CD8-positive, alpha-beta memory T cell (primary cell): ENCODE measurements at regions of chr4 and their contacts with region 1.

Region 1: DNA sequence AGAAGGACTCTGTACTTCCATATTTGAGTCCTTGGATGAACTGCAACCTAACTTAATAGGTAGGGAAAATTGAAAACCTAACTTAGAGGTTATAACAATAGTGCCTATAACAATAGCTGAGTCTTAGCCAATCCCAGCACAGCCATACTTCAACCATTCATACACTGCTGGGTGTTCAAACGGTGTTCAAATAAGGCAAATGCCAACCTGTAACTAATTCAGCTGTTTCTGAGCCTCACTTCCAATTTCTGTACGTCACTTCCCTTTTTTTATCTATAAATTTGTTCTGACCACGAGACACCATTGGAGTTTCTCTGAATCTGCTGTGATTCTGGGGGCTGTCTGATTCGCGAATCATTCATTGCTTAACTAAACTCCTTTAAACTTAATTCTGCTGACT is 9.6 kb upstream of the GRSF1 start:
- DNase-seq: no peak
- H3K4me3 ChIP-seq: no peak overlapping the region
- H3K4me3 Mint-ChIP-seq: no peak overlapping the region
- H3K27ac ChIP-seq: no peak overlapping the region
- H3K27ac Mint-ChIP-seq: peak overlapping the region in 1 of 8 donors; percentile 57
- H3K4me1 ChIP-seq: no peaks in the 10 kb centered on the region
- H3K4me1 Mint-ChIP-seq: no peaks in the 10 kb centered on the region
- H3K27me3 ChIP-seq: no peaks in the 10 kb centered on the region
- H3K27me3 Mint-ChIP-seq: no peaks in the 10 kb centered on the region

Region 2: DNA sequence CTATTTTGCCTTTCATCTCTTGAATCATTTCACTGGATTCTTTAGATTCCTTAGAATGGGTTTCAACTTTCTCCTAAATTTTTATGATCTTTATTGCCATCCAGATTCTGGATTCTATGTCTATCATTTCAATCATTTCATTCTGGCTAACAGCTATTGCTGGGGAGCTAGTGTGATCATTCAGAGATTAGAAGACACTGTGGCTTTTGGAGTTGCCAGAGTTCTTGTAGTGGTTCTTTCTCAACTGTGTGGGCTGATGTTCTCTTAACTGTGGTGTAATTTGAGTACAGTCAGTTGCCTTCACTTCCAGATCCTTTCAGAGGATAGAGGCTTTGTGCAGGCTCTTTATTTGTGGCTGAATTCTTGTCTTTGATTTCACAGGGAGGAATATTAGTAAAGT is 871.7 kb before region 1 on chr4:
- CTCF ChIA-PET with region 1: no interaction called
- POLR2A ChIA-PET with region 1: no interaction called
- DNase-seq: no peak
- H3K4me3 ChIP-seq: no peak overlapping the region
- H3K4me3 Mint-ChIP-seq: no peak overlapping the region
- H3K27ac ChIP-seq: no peak overlapping the region
- H3K27ac Mint-ChIP-seq: no peak overlapping the region
- H3K4me1 ChIP-seq: no peaks in the 10 kb centered on the region
- H3K4me1 Mint-ChIP-seq: no peaks in the 10 kb centered on the region
- H3K27me3 ChIP-seq: no peaks in the 10 kb centered on the region
- H3K27me3 Mint-ChIP-seq: no peaks in the 10 kb centered on the region

Region 3: GRCh38 chr4:70637239-70637913 is 211.9 kb before region 1 on chr4:
- CTCF ChIA-PET with region 1: no interaction called
- POLR2A ChIA-PET with region 1: interaction called, 10 read pairs
- DNase-seq: no peak
- H3K4me3 ChIP-seq: no peak overlapping the region
- H3K4me3 Mint-ChIP-seq: no peak overlapping the region
- H3K27ac ChIP-seq: no peak overlapping the region
- H3K27ac Mint-ChIP-seq: no peak overlapping the region
- H3K4me1 ChIP-seq: no peaks in the 10 kb centered on the region
- H3K4me1 Mint-ChIP-seq: no peaks in the 10 kb centered on the region
- H3K27me3 ChIP-seq: no peaks in the 10 kb centered on the region
- H3K27me3 Mint-ChIP-seq: peaks cover 7 to 29% of the 10 kb centered on the region in 2 donors

Region 4: DNA sequence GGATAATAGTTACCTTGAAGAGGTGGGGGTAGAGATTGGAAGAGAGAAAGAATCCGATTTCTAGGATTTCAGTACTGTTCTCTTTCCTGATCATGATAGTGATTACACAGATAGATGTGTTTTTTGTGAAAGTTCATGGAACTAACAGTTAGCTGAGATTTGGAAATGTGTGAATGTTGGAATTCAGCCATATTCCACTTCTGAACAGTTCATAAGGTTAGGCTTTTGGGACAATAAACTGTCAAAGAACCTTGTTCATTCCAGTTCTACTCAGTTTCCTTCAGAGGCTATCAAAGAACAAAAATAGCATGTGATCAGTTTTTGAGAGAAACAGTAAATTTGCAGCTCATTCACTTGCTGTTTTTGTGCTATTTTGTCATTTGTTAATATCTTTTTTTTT is 83.9 kb before region 1 on chr4:
- CTCF ChIA-PET with region 1: no interaction called
- POLR2A ChIA-PET with region 1: no interaction called
- DNase-seq: no peak
- H3K4me3 ChIP-seq: no peak overlapping the region
- H3K4me3 Mint-ChIP-seq: no peak overlapping the region
- H3K27ac ChIP-seq: no peak overlapping the region
- H3K27ac Mint-ChIP-seq: no peak overlapping the region
- H3K4me1 ChIP-seq: no peaks in the 10 kb centered on the region
- H3K4me1 Mint-ChIP-seq: peaks cover 0 to 3% (median 3%) of the 10 kb centered on the region in 3 donors
- H3K27me3 ChIP-seq: no peaks in the 10 kb centered on the region
- H3K27me3 Mint-ChIP-seq: no peaks in the 10 kb centered on the region

Region 5: GRCh38 chr4:70991596-70991995 is 142.3 kb after region 1 on chr4:
- CTCF ChIA-PET with region 1: no interaction called
- POLR2A ChIA-PET with region 1: no interaction called
- DNase-seq: no peak
- H3K4me3 ChIP-seq: no peak overlapping the region
- H3K4me3 Mint-ChIP-seq: no peak overlapping the region
- H3K27ac ChIP-seq: no peak overlapping the region
- H3K27ac Mint-ChIP-seq: peak overlapping the region in 2 of 8 donors; percentile 64 to 77
- H3K4me1 ChIP-seq: peaks cover 25% of the 10 kb centered on the region
- H3K4me1 Mint-ChIP-seq: peaks cover 26 to 35% (median 33%) of the 10 kb centered on the region in 3 donors
- H3K27me3 ChIP-seq: no peaks in the 10 kb centered on the region
- H3K27me3 Mint-ChIP-seq: no peaks in the 10 kb centered on the region